Endothelial cell of umbilical vein (primary cell): ENCODE measurements at regions of chr13 and their contacts with region 1.

Region 1: DNA sequence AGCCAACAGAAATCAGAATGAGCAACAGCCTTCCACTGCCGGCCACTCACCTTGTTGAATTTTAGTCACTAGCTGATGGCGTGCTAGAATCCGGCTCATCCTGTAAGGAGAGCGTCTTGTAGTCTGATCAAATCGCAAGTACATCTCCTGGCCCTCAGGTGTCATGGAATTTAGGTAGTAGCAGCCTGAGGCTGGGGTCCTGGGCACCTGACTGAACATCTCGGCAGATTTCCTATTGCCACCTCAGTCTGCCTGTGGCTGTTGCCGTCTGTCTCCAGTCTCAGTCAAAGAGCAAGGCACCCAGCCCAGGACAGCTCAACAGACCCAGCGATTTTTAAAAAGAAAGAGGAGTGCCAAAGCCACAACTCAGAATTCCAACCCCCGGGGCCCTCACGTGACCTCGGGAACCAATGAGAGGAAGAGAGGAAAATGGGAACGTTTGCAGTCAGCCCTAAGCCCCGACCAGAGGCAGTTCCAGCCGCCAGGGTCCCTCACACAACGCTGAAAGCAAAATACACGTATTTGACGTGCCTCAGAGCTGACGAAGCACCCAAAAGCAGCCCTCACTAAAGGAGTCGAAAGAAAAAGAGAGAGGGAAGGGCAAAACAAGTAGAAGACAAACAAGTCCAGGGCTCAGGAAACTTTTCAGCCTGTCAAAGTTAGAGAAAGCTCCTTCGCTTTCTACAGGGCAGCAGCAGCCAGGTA is at the start of gene STARD13:
- DNase-seq: peak; percentile 98
- H3K4me3 ChIP-seq: peak within 1 kb of the TSS; percentile 79 to 98 (median 88)
- H3K27ac ChIP-seq: peak within 1 kb of the TSS; percentile 99
- H3K4me1 ChIP-seq: peaks cover 30% of the 10 kb centered on the region
- H3K27me3 ChIP-seq: no peaks in the 10 kb centered on the region
- CTCF ChIP-seq: peak; percentile 29 to 49
- POLR2A ChIP-seq: peak; percentile 85
- total RNA-seq, gene STARD13: 41.1 and 47.7 TPM in 2 replicates

Region 2: DNA sequence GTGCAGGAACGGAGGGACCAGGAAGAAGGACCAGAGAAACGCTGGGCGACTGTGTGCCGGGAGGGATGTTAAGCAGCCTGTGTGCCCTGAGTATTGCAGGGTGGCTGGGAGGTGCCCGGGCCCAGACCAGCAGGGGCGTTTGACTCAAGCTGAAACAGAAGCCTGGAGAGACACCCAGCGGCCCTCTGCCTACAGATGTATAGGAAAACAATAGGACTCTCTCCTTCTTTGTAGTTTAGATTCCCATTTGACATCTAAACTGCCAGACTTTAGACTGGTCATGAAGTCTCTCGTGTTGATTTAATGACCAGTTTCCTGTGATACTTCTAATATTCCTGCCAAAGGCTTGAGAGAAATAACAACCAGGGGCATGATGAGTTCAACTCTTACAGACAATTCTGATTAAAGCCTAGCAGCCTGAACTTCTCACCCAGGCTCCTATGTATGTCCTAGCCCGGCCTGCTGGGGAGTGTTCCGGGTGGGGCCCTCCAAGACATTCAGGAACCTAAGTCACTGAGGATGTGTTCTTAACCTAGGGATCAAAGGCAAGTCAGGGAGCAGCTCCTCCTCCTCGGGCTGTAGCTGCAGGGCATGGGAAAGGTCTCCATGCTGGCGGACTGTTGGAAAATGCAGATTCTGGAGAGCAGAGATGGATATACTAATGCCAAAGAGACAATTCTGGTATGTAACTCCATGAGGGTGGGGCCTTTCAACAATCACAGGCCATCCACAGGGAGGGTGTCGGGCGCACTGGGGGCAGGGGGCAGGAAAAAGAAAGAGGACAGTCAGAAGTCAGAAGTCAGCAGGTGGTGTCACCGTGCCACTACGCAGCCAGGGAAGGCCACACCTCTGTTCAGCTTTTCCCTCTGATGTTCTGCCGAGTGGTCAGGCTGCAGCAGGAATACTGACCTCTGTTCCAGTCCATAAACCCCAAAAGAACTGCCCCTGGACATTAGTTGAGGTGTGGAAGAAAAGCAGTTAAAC is 131.9 kb before region 1 on chr13:
- CTCF ChIA-PET with region 1: no interaction called
- POLR2A ChIA-PET with region 1: no interaction called
- dilution Hi-C with region 1: no loop called
- intact Hi-C with region 1: loop called (anchors 1 kb)
- DNase-seq: peak; percentile 96
- H3K4me3 ChIP-seq: no peak overlapping the region
- H3K27ac ChIP-seq: peak overlapping the region; percentile 91
- H3K4me1 ChIP-seq: peaks cover 31% of the 10 kb centered on the region
- H3K27me3 ChIP-seq: no peaks in the 10 kb centered on the region
- CTCF ChIP-seq: peak; percentile 59 to 65
- POLR2A ChIP-seq: peak; percentile 46

Region 3: GRCh38 chr13:33194820-33195692 is 90.5 kb before region 1 on chr13:
- CTCF ChIA-PET with region 1: interaction called, 3 read pairs
- POLR2A ChIA-PET with region 1: no interaction called
- dilution Hi-C with region 1: no loop called
- intact Hi-C with region 1: loop called (anchors 1 kb)
- DNase-seq: peak; percentile 86
- H3K4me3 ChIP-seq: no peak overlapping the region
- H3K27ac ChIP-seq: peak overlapping the region; percentile 87
- H3K4me1 ChIP-seq: peaks cover 39% of the 10 kb centered on the region
- H3K27me3 ChIP-seq: no peaks in the 10 kb centered on the region
- CTCF ChIP-seq: no peak
- POLR2A ChIP-seq: no peak

Region 4: DNA sequence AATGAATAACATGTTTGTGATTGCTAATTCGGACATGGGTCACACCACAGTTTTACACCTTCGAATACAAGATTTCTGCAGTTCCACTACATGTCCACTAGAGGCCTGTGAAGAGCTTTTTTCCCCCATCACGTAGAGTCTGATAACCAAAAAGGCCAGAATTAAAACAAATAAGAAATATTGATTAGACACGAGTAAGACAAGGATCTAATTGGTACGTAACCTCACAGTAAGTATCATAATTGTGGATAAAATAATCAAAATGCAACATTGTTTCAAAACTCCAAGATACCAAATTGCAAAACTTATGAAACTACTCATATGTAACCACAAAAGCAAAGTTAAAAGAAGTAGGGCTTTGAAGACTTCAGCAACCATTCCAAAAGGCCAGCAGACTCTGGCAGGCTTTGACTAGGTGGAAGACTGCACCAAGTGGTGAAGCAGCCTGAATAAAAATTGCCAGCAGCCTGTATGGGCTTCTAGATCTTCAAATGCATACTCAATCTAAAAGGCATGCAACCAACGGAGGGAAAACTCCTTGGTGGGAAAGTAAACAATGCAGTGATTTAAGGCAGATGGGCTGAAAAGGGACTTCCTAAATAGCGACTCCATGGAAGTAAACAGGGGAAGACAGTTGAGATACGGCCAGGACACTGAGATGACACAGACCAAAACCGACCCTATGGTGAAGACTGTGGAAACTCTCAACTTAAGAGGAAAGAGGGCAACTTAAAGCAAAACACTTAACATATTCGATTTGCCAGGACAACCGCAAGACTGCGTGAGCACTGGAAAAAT is 56.7 kb before region 1 on chr13:
- CTCF ChIA-PET with region 1: interaction called, 38 read pairs
- POLR2A ChIA-PET with region 1: no interaction called
- dilution Hi-C with region 1: no loop called
- intact Hi-C with region 1: loop called (anchors 1 kb)
- DNase-seq: peak; percentile 71
- H3K4me3 ChIP-seq: no peak overlapping the region
- H3K27ac ChIP-seq: peak overlapping the region; percentile 46
- H3K4me1 ChIP-seq: peaks cover 31% of the 10 kb centered on the region
- H3K27me3 ChIP-seq: no peaks in the 10 kb centered on the region
- CTCF ChIP-seq: peak; percentile 65 to 70
- POLR2A ChIP-seq: no peak

Region 5: DNA sequence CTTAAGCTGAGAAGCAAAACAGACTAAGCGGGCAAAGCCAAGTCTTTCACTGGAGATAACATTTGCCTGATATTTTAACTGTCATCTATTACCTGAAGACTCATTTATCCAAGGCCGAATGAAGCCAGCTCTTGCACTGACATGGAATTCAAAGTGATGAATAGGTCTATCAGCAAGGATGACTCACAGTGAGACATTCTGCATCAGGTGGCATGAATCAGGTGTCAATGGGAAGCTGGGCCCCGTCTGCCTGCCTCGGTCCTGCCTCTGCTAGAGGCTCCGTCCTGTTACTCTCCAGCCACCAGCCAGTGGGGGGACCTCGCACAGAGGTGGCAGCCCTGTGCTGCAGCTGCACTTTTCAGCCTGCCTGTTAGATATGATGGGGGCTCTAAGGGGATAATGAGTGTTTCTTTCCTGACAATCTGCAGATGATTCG is 23.5 kb before region 1 on chr13:
- CTCF ChIA-PET with region 1: interaction called, 4 read pairs
- POLR2A ChIA-PET with region 1: no interaction called
- dilution Hi-C with region 1: no loop called
- intact Hi-C with region 1: loop called (anchors 2 kb)
- DNase-seq: peak; percentile 22
- H3K4me3 ChIP-seq: no peak overlapping the region
- H3K27ac ChIP-seq: no peak overlapping the region
- H3K4me1 ChIP-seq: peaks cover 8% of the 10 kb centered on the region
- H3K27me3 ChIP-seq: no peaks in the 10 kb centered on the region
- CTCF ChIP-seq: no peak
- POLR2A ChIP-seq: no peak

Region 6: DNA sequence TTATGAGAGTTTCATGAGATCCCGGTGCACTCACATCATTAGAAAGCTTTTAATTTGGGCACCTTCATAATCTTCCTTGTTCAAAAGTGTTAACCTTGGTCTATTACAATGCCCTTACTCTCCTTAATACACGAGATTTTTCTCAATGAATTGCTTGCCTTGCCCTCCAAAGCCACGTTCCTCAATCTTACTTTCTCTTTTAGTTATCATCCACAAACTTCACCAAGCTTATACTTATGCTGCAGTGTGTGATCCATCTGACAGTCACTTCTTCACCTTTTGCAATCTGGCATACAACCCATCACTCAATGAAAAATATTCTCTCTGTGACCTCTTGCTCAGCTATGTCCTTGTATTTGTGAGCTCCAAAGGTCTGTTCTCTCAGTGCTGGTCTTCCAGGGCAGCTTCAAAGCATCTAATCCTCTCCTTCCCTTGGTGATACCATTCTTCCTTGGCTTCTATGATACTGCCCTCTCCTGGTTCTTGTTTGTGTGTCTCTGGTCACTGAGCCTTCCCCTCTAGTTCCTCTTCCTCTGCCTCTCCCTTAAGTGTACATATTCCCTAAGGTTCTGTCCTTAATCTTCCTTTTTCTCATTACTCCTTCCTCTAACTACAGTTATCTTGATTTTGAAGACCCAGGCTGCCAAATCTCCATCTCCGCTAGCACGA is 202.1 kb after region 1 on chr13:
- CTCF ChIA-PET with region 1: interaction called, 11 read pairs
- POLR2A ChIA-PET with region 1: no interaction called
- dilution Hi-C with region 1: no loop called
- intact Hi-C with region 1: no loop called
- DNase-seq: peak; percentile 31
- H3K4me3 ChIP-seq: no peak overlapping the region
- H3K27ac ChIP-seq: no peak overlapping the region
- H3K4me1 ChIP-seq: peaks cover 20% of the 10 kb centered on the region
- H3K27me3 ChIP-seq: no peaks in the 10 kb centered on the region
- CTCF ChIP-seq: peak in 1 of 2 donors; percentile 20
- POLR2A ChIP-seq: no peak

Region 7: DNA sequence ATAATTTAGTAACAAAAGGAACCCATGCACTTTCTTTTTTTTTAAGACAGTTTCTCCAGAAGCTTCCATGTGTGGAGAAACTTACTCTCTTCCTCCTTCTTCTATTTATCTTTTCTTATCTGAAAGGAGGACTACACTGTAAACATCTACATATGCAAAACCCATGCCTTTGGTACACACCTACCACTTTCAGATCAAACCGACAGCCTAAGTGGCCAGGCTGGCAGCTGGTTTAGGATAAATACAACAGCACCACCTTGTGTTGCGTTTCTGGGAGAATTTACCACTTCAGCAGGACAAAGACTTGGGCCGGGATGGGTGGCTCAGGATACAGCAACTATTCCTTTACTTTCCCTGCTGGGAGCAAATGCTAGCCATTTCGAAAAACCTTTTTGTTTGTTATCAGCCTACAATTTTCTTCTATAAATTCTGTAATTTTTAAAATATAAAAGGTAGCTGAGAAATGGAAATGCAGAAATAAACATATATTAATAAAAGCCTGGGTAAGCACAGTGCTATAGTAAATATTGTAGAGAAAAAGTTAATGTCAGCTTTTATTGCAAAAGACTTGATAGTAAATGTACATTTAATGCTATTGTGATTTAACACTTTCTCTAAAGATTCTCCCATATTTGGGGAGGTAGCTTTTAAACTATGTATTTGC is 438.3 kb after region 1 on chr13:
- CTCF ChIA-PET with region 1: no interaction called
- POLR2A ChIA-PET with region 1: no interaction called
- dilution Hi-C with region 1: no loop called
- intact Hi-C with region 1: loop called (anchors 1 kb)
- DNase-seq: peak; percentile 85
- H3K4me3 ChIP-seq: no peak overlapping the region
- H3K27ac ChIP-seq: no peak overlapping the region
- H3K4me1 ChIP-seq: peaks cover 10% of the 10 kb centered on the region
- H3K27me3 ChIP-seq: no peaks in the 10 kb centered on the region
- CTCF ChIP-seq: peak; percentile 62 to 70
- POLR2A ChIP-seq: no peak

Region 8: GRCh38 chr13:33918199-33918932 is 632.8 kb after region 1 on chr13:
- CTCF ChIA-PET with region 1: no interaction called
- POLR2A ChIA-PET with region 1: no interaction called
- dilution Hi-C with region 1: no loop called
- intact Hi-C with region 1: no loop called
- DNase-seq: peak; percentile 28
- H3K4me3 ChIP-seq: no peak overlapping the region
- H3K27ac ChIP-seq: no peak overlapping the region
- H3K4me1 ChIP-seq: peaks cover 7% of the 10 kb centered on the region
- H3K27me3 ChIP-seq: no peaks in the 10 kb centered on the region
- CTCF ChIP-seq: no peak
- POLR2A ChIP-seq: no peak